ENCODE measurements at regions of chr12 and their contacts with region 1.

Region 1: GRCh38 chr12:125049093-125049458 is 16.2 kb upstream of the AACS start:
- DNase-seq: no peak
- ATAC-seq: no peak
- H3K4me3 Mint-ChIP-seq: peak overlapping the region; percentile 92
- H3K27ac Mint-ChIP-seq: peak overlapping the region; percentile 85
- H3K4me1 Mint-ChIP-seq: peaks cover 4% of the 10 kb centered on the region
- H3K27me3 Mint-ChIP-seq: peaks cover 3% of the 10 kb centered on the region

Region 2: DNA sequence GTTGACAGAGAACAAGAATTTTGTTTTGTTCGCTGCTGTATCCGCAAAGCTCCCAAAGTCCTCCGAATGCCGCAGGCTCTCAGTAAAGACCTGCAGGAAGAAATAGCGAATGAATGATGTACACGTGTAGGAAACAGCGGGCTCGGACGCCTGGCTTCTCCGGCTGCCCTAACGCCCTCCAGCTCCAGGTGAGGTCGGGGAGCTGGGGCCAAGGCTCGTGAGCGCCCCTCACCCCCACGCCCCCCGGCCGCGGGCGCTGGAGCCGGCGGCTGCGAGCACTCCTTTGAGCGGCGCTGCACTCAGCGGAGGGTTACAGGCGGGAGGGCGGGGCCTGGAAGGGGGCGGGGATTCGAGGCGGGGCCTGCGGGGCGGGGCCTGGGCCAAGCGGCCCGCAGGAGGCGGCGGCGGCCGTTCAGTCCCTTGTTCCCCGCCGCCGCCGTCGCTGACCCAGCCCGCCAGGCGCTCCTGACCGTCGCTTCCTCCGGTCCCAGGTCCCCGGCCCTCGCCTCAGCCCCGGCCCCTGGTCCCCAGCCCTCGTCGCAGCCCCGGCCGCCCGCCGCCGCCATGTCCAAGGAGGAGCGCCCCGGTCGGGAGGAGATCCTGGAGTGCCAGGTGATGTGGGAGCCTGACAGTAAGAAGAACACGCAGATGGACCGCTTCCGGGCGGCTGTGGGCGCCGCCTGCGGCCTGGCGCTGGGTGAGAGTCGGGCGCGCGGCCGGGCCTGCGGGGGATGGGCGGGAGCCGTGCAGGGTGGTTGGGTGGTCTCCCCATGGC is 16.1 kb after region 1 on chr12 and contains the start of gene AACS:
- POLR2A ChIA-PET with region 1: interaction called, 12 read pairs
- DNase-seq: peak; percentile 83
- ATAC-seq: peak; percentile 94
- H3K4me3 Mint-ChIP-seq: peak within 1 kb of the TSS; percentile 88
- H3K27ac Mint-ChIP-seq: peak within 1 kb of the TSS; percentile 79
- H3K4me1 Mint-ChIP-seq: peaks cover 11% of the 10 kb centered on the region
- H3K27me3 Mint-ChIP-seq: peaks cover 20% of the 10 kb centered on the region
- total RNA-seq, gene AACS: 25.4 to 25.5 TPM

Region 3: DNA sequence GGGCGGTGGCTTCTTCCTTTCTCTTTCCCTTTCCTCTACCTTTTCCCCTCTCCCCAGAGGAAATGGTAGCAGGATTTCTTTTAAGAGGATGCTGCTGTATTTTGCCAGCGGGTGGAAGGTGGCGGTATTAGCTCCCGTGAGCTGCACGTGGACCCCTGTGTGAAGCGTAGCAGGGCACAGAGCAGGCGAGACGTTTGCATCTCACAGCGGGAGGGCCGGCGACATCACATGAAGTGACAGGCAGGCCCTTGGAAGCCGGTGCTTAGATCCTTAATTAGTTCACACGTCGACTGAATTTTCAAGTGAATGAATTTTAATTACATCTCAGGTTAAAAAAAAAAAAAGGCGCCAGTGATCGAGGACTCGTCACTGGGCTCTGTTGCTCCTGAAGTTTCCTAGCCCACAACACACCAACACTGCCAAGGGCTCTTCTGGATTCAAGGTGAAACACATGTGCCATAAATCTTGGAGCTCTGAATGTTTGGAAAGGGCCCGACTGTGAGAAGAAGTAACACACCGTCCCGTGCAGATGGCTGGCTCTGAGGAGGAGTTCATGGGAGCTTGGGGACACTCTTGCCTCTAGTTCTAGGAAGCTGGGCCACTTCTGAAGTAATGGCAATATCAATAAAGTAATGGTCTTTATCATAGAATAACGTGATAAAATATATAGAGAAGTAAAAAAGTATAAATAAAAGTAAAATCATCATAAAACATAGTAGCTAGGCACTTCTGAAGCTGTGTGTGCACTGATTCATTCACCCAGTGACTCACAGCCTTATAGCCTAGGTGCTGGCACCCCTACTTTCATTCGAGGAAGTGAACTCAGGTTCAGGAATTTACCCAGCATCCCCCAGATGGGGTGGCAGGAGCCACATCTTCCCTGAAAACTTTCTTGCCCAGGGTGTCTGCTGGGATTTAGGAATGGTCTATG is 91.5 kb after region 1 on chr12:
- POLR2A ChIA-PET with region 1: no interaction called
- DNase-seq: no peak
- ATAC-seq: no peak
- H3K4me3 Mint-ChIP-seq: no peak overlapping the region
- H3K27ac Mint-ChIP-seq: no peak overlapping the region
- H3K4me1 Mint-ChIP-seq: peaks cover 2% of the 10 kb centered on the region
- H3K27me3 Mint-ChIP-seq: no peaks in the 10 kb centered on the region